ENCODE measurements at regions of chr4 and their contacts with region 1.

Region 1: DNA sequence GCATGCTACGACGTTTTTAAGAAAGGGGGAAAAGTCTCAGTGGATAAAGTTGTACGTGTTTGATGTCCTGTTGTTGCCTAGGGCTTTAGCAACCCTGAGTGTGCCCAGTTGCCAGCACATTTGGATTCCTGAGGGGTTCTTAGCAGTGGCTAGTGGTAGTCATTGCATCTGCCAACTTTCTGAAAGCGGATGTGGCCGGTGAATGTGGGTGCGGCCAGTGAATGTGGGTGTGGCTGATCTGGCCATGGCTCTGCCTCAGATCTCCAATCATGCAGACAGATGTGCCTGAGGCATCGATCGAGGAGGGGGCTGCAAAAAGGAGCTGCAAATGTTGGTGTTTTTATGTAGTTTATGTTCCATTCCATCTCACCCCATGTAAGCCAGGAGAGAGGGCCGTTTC is 41.5 kb upstream of the FAT1 start:
- DNase-seq: peak; percentile 55
- H3K4me3 ChIP-seq: no peak overlapping the region
- H3K27me3 ChIP-seq: no peaks in the 10 kb centered on the region
- CTCF ChIP-seq: no peak

Region 2: DNA sequence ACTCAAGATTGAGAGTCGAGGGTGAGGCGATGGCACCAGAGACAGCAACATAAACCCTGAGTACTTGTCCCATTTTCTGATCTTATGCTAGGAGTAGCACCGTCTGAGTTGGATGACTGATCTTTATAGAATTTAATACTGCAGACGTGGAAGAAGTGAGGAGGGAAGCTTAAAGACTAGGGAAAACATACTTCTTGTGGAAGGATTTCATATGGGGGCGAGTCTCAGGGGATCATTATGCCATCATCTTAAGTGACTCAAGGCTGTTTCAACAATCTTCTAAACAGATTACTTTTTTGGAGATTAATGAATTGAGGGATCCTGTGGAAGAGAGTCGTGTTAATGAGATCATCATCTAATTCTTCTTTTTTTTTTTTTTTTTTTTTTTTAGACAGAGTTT is 24.3 kb before region 1 on chr4:
- CTCF ChIA-PET with region 1: no interaction called
- POLR2A ChIA-PET with region 1: interaction called, 15 read pairs
- DNase-seq: no peak
- H3K4me3 ChIP-seq: no peak overlapping the region
- H3K27me3 ChIP-seq: no peaks in the 10 kb centered on the region
- CTCF ChIP-seq: no peak